Caco-2 (cell line): ENCODE measurements at regions of chr7 and their contacts with region 1.

Region 1: GRCh38 chr7:14483663-14484062 is 418.9 kb downstream of the DGKB start:
- DNase-seq: no peak
- H3K4me3 ChIP-seq: no peak overlapping the region
- H3K4me3 Mint-ChIP-seq: no peak overlapping the region
- H3K27ac Mint-ChIP-seq: no peak overlapping the region
- H3K4me1 ChIP-seq: no peaks in the 10 kb centered on the region
- H3K4me1 Mint-ChIP-seq: no peaks in the 10 kb centered on the region
- H3K27me3 ChIP-seq: no peaks in the 10 kb centered on the region
- H3K27me3 Mint-ChIP-seq: no peaks in the 10 kb centered on the region
- CTCF ChIP-seq: no peak

Region 2: DNA sequence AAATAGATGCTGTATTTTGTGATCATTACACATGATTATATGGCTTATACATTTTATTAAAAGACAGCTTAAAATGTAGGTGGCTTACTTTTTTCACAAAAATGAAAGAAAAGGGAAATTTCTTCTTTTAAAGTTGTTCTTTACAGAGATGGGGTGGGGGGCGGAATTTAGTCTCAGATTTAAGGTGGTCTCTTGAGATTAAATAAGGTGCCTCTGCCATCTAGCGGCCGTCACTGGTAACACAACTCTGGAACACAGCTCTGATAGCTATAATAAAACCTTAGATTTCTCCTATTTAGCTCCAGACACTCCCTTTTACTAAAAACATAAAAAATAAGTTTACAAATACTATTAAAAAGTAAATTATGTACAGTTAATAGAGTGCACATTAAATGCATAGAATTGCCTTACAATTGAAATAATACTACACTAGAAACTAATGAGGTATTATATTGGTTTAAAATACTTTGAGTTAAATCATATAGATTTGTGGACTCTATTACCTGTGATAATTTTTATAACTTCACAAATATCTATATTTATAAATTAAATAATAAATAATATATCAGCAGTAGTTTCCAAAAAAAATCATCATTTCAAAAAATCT is 208.0 kb after region 1 on chr7:
- CTCF ChIA-PET with region 1: interaction called, 3 read pairs
- POLR2A ChIA-PET with region 1: no interaction called
- intact Hi-C with region 1: loop called (anchors 1 kb)
- DNase-seq: peak in 1 of 2 experiments; percentile 48
- H3K4me3 ChIP-seq: no peak overlapping the region
- H3K4me3 Mint-ChIP-seq: no peak overlapping the region
- H3K27ac Mint-ChIP-seq: no peak overlapping the region
- H3K4me1 ChIP-seq: no peaks in the 10 kb centered on the region
- H3K4me1 Mint-ChIP-seq: no peaks in the 10 kb centered on the region
- H3K27me3 ChIP-seq: no peaks in the 10 kb centered on the region
- H3K27me3 Mint-ChIP-seq: peaks cover 1% of the 10 kb centered on the region
- CTCF ChIP-seq: peak; percentile 80 to 93